ENCODE measurements at regions of chr1 and their contacts with region 1.

Region 1: GRCh38 chr1:222713091-222713961 is 962 bp downstream of the BROX start:
- DNase-seq: peak; percentile 92
- ATAC-seq: peak; percentile 68
- H3K4me3 Mint-ChIP-seq: peak overlapping the region; percentile 98
- H3K27ac Mint-ChIP-seq: peak overlapping the region; percentile 100
- H3K4me1 Mint-ChIP-seq: peaks cover 37% of the 10 kb centered on the region
- H3K27me3 Mint-ChIP-seq: no peaks in the 10 kb centered on the region

Region 2: DNA sequence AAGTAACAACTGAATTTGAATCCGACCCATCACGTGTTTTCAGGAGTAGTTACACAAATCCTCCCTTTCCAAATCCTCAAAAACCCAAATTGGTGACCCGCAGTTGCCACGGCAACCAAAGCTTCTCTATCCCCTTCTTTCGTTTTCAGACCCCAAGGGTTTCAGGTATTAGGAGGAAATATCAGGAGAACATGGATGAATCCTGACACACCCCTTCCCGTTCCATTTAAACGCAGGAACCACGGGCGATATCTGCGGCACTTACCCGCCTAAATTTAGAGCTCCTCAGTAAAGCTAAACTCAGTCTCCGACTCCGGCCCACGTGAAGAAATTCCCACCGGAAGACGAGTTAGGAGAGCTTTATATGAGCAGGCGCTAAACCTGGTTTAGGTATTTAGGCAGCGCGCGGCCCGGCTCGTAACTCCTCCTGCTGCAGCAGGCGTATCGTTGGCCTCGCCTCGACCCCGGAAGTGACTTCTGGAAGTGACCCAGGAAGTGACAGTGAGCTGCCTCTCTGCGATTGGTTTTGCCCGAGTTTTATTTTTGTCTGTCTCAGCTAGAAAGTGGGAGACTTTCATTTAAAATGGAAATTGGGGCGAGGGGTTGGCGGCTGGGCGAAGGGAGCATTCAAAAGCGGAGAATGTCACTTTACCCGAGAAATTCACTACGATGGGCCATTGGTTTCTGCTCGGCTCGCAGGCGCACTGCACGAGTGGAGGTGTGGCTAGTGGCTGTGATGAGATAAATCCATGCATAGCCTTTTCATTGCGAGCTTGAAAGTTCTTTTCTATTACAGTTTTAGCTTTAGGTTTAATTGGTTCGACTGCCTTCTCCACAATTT is 123.6 kb before region 1 on chr1 and contains the start of gene TAF1A:
- CTCF ChIA-PET with region 1: interaction called, 3 read pairs
- POLR2A ChIA-PET with region 1: no interaction called
- intact Hi-C with region 1: loop called (anchors 1 to 10 kb)
- DNase-seq: peak; percentile 93
- ATAC-seq: peak; percentile 99
- H3K4me3 Mint-ChIP-seq: peak within 1 kb of the TSS; percentile 99
- H3K27ac Mint-ChIP-seq: peak within 1 kb of the TSS; percentile 99
- H3K4me1 Mint-ChIP-seq: peaks cover 36% of the 10 kb centered on the region
- H3K27me3 Mint-ChIP-seq: no peaks in the 10 kb centered on the region
- total RNA-seq, gene TAF1A: 18.5 to 21.1 TPM

Region 3: DNA sequence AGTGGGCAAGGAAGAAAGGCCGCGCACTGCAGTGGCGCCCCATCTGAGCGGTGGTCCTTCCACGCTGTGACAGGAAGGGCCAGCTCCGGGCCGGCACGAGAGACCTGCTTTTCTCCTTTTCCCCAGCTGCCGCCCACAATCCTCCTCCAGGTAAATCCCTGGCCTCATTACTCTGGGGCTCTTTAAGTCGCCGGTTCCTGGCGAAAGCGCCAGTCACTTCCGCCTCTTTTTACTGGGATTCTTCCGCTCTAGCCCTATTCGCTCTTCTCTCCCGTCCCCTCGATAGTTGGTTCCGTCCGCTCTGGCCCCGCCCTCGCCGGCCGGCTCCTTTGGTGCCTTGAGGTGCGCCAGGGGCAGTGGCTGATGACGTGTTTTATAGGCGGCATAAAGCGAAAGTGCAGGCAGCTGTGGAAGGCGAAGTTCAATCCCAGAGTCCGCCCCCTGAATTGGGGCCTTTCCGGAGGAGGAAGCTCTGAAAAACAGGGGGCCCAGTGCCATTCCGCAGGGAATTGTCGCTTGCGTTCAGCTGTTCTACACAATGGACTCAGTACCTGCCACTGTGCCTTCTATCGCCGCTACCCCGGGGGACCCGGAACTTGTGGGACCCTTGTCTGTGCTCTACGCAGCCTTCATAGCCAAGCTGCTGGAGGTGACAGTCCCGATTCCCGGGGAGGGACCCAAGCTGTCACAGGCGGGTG is 69.2 kb before region 1 on chr1:
- CTCF ChIA-PET with region 1: interaction called, 8 read pairs
- POLR2A ChIA-PET with region 1: interaction called, 8 read pairs
- intact Hi-C with region 1: loop called (anchors 1 kb)
- DNase-seq: peak; percentile 98
- ATAC-seq: peak; percentile 97
- H3K4me3 Mint-ChIP-seq: peak overlapping the region; percentile 86
- H3K27ac Mint-ChIP-seq: peak overlapping the region; percentile 95
- H3K4me1 Mint-ChIP-seq: peaks cover 26% of the 10 kb centered on the region
- H3K27me3 Mint-ChIP-seq: no peaks in the 10 kb centered on the region

Region 4: GRCh38 chr1:222814536-222815439 is 101.5 kb after region 1 on chr1 and contains the start of gene DISP1:
- CTCF ChIA-PET with region 1: no interaction called
- POLR2A ChIA-PET with region 1: no interaction called
- intact Hi-C with region 1: loop called in 1 of 2 experiments (anchors 1 kb)
- DNase-seq: peak; percentile 88
- ATAC-seq: peak; percentile 88
- H3K4me3 Mint-ChIP-seq: peak within 1 kb of the TSS; percentile 90
- H3K27ac Mint-ChIP-seq: peak within 1 kb of the TSS; percentile 91
- H3K4me1 Mint-ChIP-seq: peaks cover 25% of the 10 kb centered on the region
- H3K27me3 Mint-ChIP-seq: no peaks in the 10 kb centered on the region
- total RNA-seq, gene DISP1: 0.98 to 1.9 TPM

Region 5: DNA sequence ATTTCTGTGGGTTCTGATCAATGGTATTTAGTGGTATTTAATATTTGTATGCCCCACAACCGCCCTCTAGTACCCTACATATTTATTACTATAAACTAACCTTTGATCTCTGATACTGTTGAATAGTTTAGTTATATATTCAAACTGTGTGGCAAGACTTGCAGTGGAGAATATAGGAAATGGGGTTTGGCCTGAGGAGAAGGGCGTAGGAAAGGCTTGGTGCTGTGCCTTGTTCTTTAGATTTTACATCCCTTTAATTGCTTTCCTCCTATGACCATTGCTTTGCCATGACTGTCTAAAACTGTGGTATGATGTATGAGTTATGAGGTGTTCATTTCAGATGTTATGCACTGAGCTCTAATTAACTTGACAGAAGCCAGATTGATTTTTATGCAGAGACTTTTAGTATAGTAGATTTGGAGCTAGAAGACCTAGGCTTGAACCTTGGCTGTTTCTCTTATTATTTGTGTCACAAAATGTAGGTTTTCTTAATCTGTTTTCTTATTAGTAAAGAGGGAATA is 120.1 kb after region 1 on chr1:
- CTCF ChIA-PET with region 1: no interaction called
- POLR2A ChIA-PET with region 1: no interaction called
- intact Hi-C with region 1: no loop called
- DNase-seq: no peak
- ATAC-seq: no peak
- H3K4me3 Mint-ChIP-seq: no peak overlapping the region
- H3K27ac Mint-ChIP-seq: no peak overlapping the region
- H3K4me1 Mint-ChIP-seq: no peaks in the 10 kb centered on the region
- H3K27me3 Mint-ChIP-seq: no peaks in the 10 kb centered on the region

Measured in activated CD4-positive, alpha-beta T cell treated with anti-CD3 and anti-CD28 coated beads for 36 hours (primary cell).